OCI-LY7 (cell line): ENCODE measurements at regions of chr22 and their contacts with region 1.

Region 1: GRCh38 chr22:41666661-41667258 is 21.9 kb downstream of the SNU13 start:
- DNase-seq: peak; percentile 96
- H3K4me3 ChIP-seq: peak overlapping the region; percentile 57
- H3K27ac ChIP-seq: peak overlapping the region; percentile 87
- H3K4me1 ChIP-seq: peaks cover 16% of the 10 kb centered on the region
- CTCF ChIP-seq: peak; percentile 99

Region 2: DNA sequence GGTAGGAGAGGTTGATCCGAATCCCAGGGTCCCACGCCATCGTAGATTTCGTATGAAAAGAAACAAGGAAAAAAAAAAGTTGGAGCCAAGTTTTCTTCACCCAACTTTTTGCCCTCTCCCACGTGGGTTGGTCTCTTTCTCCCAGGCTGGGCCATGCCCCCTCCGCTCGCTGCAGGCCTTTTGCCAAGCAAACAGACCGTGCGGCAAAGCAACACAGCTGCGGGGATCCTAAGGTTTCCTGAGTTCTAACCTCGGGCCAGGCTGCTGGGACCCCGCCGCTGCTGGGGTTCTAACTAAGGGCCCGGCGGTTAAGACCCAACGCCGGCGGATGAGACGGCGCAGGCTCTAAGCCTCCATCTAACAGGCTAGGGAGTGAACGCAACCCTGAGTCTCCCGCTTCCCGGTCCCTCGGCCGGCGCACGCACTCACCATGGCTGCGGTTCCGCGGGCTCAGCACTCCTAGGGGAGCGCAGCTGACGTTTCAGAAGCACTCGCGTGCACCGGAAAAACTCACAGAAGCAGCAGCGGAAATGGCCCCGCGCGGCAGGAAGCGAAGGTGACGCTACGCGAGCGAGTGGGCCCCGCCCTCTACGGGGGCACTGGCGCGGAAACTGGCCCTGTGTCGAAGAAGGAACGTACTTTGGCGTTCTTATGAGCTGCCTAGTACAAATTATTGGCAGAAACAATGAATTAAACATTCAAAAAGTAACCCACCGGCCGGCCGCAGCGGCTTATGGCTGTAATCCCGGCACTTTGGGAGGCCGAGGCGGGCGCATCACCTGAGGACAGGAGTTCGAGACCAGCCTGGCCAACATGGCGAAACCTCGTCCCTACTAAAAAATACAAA is 21.8 kb after region 1 on chr22 and contains the start of gene SNU13:
- CTCF ChIA-PET with region 1: interaction called, 5 read pairs
- POLR2A ChIA-PET with region 1: interaction called, 6 read pairs
- intact Hi-C with region 1: loop called (anchors 2 kb)
- DNase-seq: peak; percentile 97
- H3K4me3 ChIP-seq: peak within 1 kb of the TSS; percentile 87
- H3K27ac ChIP-seq: peak within 1 kb of the TSS; percentile 83
- H3K4me1 ChIP-seq: peaks cover 33% of the 10 kb centered on the region
- CTCF ChIP-seq: no peak
- total RNA-seq, gene SNU13: 155 and 199 TPM in 2 replicates